HEK293T (cell line): ENCODE measurements at regions of chr6 and their contacts with region 1.

Region 1: GRCh38 chr6:28838634-28839442 is 84.9 kb downstream of the TRIM27 start:
- DNase-seq: peak; percentile 70

Region 2: DNA sequence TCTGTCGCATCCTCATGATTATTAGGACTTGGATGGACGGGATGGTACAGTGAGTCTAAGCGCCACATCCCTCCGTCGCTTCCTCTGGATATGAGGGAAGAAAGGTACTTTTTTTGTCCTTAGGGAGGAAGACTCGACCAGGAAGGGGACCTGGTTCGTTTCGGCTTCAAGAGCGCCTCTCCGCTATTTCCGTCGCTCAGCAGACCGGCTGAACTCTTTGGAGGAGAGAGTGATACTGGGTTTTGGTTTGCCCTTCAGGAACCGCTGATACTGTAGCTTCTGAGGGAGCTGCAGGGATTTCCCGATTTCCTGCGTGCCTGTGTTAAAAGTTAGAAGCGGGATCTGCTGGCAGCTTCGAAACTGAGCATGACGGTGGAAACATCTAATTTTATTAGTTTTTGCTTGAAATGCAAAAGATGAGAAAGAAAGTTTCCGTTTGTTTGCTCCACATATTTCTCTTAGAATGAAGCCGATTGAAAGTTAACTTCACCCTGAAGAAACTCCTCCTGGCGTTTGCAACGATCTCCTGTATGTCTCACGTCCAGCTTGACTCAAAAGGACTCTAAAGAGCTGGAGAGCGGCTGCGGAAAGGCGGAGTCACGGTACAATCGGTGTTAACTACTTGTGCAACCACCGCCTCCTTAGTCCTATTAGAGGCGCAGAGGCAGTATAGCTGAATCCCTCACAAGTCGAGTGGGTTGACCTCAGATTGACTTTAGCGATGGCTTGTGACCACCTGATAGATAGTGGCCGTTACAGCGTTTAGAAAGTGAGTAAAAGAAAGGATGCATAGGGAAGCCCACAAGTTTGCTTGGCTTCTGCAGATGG is 44.4 kb before region 1 on chr6:
- CTCF ChIA-PET with region 1: interaction called, 12 read pairs
- POLR2A ChIA-PET with region 1: interaction called, 14 read pairs
- DNase-seq: no peak

Region 3: GRCh38 chr6:28824793-28825731 is 13.8 kb before region 1 on chr6:
- CTCF ChIA-PET with region 1: interaction called, 16 read pairs
- POLR2A ChIA-PET with region 1: interaction called, 4 read pairs
- DNase-seq: no peak

Region 4: DNA sequence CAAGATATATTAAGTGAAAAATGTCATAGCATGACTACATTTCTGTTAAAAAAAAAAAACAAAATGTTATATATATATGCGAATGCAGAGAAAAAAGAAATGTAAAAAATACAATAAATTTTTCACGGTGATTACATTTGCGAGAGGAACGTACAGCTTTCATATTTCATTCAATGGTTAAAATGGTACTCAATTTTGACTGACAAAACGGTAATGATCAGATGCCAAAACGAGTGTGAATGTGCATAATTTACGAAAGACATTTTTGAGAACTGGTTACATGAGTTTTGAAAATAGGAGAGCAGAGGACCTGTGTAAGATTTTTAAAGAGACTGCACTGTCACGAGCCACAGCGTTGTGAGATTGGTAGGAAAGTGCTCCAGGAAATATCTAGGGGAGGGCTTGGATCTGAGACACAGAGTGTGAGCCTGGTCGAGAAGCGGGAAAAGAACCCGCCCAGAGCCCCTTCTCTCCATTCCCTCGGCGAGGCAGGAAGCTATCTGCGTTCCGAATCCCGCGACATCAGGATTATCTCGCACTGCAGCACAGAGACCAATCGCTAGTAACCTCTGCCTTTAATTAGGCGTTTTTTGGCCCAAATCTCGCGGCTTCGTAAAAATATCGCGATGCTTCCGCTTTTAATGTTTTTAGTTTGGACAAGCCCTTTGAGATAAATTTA is 56.4 kb after region 1 on chr6:
- CTCF ChIA-PET with region 1: no interaction called
- POLR2A ChIA-PET with region 1: interaction called, 11 read pairs
- DNase-seq: peak; percentile 87

Region 5: DNA sequence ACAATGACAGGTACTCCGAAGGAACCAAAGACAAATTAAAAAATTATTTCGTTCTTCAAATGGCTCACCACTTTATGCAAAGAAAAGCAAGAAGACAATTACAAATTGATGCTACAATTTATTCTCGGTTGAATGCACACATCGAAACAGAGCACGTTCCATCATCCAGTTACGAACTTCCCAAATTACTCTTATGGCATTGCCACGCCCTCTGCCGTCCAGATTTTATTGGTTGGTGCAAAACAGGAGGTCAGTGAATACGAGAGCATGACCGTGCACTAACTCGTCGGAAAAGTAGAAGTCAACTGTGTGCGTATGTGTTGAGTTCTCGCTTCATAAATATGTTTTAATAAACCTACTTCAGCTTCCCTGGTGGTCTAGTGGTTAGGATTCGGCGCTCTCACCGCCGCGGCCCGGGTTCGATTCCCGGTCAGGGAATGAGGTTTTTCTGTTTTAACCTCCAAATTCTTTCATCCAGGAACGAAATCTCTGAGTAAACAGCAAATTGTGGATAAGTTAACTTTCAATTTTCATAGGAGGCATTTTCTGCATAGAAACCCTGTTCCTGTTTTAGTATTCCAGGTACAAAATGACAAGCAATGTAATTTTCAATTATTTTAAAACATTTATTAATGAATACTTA is 143.1 kb after region 1 on chr6:
- CTCF ChIA-PET with region 1: interaction called, 18 read pairs
- POLR2A ChIA-PET with region 1: interaction called, 26 read pairs
- DNase-seq: peak; percentile 69

Region 6: GRCh38 chr6:29097803-29098202 is 259.0 kb after region 1 on chr6:
- CTCF ChIA-PET with region 1: no interaction called
- POLR2A ChIA-PET with region 1: no interaction called
- DNase-seq: no peak